ENCODE measurements at regions of chr6 and their contacts with region 1.

Region 1: DNA sequence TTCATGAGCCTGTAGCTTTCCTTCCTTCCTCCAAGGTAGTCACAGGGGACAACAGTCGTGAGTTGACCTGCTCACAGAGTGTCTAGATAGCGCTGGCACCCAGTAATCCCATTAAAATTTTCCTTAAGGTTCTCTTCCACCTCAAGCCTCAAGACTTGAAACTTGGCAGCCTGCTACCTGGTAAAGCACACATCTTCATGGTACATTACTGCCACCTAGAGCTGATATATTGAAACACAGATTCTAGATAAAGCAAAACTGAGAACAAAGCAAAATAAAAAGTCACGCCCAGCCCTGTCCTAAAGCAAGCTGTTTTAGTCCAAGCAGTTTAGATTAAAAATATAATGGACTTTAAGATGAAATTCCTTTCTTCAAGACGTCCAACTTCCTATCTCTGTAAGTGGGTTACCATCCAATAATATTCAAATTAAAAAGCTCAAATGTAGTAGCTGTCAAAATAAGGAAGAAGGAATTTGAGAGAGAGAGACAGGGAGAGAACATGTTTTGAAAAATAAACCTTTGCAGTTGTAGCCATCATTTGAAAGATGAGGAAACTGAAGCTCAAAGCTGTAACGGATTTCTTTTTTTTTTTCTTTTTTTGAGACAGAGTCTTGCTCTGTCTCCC is 50.7 kb upstream of the CD83 start:
- DNase-seq: peak; percentile 80
- ATAC-seq: peak; percentile 76
- H3K4me3 ChIP-seq: no peak overlapping the region
- H3K27ac ChIP-seq: no peak overlapping the region
- H3K4me1 ChIP-seq: peaks cover 4% of the 10 kb centered on the region
- H3K27me3 ChIP-seq: 0 out of 2 replicates have a peak, but pooled peaks cover 1% of the 10 kb centered on the region
- CTCF ChIP-seq: peak; percentile 78
- POLR2A ChIP-seq: no peak
- RAD21 ChIP-seq: peak; percentile 85

Region 2: GRCh38 chr6:12182676-12183075 is 1884.2 kb before region 1 on chr6:
- CTCF ChIA-PET with region 1: no interaction called
- POLR2A ChIA-PET with region 1: no interaction called
- dilution Hi-C with region 1: no loop called
- in situ Hi-C with region 1: no loop called
- intact Hi-C with region 1: no loop called
- DNase-seq: peak; percentile 74
- ATAC-seq: peak; percentile 92
- H3K4me3 ChIP-seq: no peak overlapping the region
- H3K27ac ChIP-seq: no peak overlapping the region
- H3K4me1 ChIP-seq: peaks cover 2% of the 10 kb centered on the region; the same call in 1 of the 2 replicates
- H3K27me3 ChIP-seq: no peaks in the 10 kb centered on the region
- CTCF ChIP-seq: no peak
- POLR2A ChIP-seq: no peak
- RAD21 ChIP-seq: no peak

Region 3: GRCh38 chr6:13508711-13509705 is 557.9 kb before region 1 on chr6:
- CTCF ChIA-PET with region 1: no interaction called
- POLR2A ChIA-PET with region 1: no interaction called
- dilution Hi-C with region 1: no loop called
- in situ Hi-C with region 1: no loop called
- intact Hi-C with region 1: no loop called
- DNase-seq: peak; percentile 44
- ATAC-seq: no peak
- H3K4me3 ChIP-seq: no peak overlapping the region
- H3K27ac ChIP-seq: no peak overlapping the region
- H3K4me1 ChIP-seq: no peaks in the 10 kb centered on the region; the same call in 1 of the 2 replicates
- H3K27me3 ChIP-seq: no peaks in the 10 kb centered on the region; the same call in 1 of the 2 replicates
- CTCF ChIP-seq: no peak
- POLR2A ChIP-seq: no peak
- RAD21 ChIP-seq: no peak

Region 4: DNA sequence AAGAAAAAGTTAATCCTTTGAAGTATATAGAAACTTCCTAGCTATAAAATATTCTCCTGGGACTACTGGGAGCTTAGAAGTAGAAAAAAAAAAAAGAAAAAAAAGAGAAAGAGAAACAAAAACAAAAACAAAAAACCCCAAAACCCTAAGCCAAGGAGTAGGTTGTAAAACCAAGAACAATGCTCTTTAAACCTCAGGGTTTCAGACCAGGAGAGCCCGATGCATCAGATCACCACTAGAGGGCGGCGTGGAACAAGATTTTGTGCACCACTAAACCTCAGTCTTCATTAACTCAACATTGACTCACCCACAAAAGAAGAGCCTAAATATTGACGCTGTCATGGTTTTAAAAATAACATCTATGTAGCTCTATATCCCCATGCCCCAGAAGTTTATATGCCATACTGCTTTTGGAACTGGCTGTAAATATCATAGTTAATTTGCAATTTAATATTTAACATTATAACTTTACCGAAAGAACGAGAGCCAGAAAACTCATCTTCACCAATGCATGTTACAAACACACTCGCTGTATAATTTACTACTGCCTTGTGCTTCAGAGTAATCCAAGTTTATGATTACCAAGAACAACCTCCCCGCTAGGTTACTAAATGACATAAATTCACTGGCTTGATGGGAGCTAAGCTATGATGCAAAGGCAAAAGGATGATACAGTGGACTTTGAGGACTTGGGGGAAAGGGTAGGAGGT is 271.7 kb before region 1 on chr6:
- CTCF ChIA-PET with region 1: no interaction called
- POLR2A ChIA-PET with region 1: no interaction called
- dilution Hi-C with region 1: no loop called
- in situ Hi-C with region 1: loop called (anchors 10 kb)
- intact Hi-C with region 1: loop called (anchors 1 kb)
- DNase-seq: peak; percentile 83
- ATAC-seq: peak; percentile 96
- H3K4me3 ChIP-seq: no peak overlapping the region
- H3K27ac ChIP-seq: no peak overlapping the region
- H3K4me1 ChIP-seq: no peaks in the 10 kb centered on the region
- H3K27me3 ChIP-seq: no peaks in the 10 kb centered on the region
- CTCF ChIP-seq: peak; percentile 91
- POLR2A ChIP-seq: peak; percentile 22; the same call in 1 of the 2 replicates
- RAD21 ChIP-seq: peak; percentile 76

Region 5: DNA sequence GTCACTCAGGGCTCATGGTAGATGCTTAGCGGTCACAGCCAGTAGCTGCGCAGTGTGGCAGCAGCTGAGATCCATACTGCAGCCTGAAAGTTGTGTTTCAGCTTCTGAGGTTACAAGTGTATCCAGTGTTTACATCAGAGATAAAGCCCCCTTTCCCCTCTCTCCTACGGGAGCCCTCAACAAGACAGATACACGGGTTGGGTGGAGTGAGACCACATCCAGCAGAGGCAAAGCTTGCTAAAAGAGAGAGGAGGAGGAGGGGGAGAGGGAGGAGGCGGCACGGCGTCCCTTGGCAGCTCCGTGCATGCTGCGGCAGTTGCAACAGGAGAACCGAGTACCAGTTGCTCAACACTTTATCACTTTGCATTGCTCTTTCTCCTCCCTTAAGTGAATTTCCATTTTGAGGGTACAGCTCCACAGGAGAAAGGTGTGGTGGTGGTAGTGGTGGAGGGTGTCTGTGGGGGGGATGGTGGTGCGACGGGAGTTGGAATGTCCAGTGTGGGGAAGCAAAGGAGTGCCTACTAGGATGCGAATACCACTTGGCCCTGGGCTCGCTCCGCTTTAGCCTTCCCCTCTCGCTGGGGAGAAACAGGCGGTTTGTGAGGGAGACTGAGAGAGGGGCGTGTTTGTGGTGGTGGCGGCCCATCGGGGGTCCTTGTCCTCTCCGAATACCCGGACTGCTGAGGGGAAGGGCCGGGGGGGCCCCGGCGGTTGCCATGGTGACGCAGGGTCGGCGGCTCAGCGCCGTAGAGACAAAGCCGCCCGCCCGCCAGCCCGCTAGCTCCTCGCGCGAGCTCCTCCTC is 142.5 kb before region 1 on chr6:
- CTCF ChIA-PET with region 1: interaction called, 12 read pairs
- POLR2A ChIA-PET with region 1: no interaction called
- dilution Hi-C with region 1: no loop called
- in situ Hi-C with region 1: no loop called
- intact Hi-C with region 1: no loop called
- DNase-seq: peak; percentile 36
- ATAC-seq: peak; percentile 88
- H3K4me3 ChIP-seq: peak overlapping the region; percentile 57
- H3K27ac ChIP-seq: peak overlapping the region; percentile 70
- H3K4me1 ChIP-seq: peaks cover 2% of the 10 kb centered on the region
- H3K27me3 ChIP-seq: peaks cover 4% of the 10 kb centered on the region; the same call in 1 of the 2 replicates
- CTCF ChIP-seq: no peak
- POLR2A ChIP-seq: no peak
- RAD21 ChIP-seq: no peak

Region 6: DNA sequence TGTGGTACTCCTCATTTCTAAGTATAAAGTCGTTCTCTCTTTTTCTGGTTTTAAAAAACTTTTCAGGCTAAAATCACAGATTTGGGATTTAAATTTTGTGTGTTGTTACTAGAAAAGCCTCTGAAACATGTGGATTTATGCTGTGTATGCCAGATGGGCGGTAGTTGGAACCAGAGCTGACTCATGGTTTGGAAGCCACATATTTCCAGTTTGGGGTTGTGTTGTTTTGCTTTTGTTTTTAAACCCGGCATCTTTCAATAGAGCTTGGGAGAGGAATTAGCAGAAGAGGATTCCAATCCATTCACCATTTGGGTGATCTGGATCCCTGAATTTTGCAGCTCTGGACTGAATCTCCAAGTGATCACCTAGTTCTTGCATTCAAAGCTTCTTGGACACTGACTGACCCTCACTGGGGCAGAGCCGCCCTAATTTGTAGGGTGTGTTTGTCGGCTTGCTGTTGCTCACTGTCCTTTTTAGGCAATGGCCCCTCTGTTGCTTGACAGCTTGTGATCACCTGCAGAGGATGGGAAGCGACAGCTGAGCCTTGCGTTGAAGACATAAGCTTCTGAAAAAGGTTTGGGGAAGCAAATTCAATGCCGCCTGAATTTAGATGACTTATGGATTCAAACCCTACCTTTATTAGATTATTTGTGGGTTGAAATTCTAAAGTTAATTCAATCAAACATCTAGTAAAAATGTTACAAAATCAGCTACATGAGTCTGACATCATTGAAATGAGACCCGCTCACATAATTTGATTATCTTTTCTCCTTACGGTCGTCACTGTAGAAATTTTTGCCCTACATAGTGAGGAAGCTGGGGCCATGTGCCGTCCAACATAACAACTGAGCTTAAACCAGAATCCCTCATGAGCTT is 29.3 kb before region 1 on chr6:
- CTCF ChIA-PET with region 1: interaction called, 12 read pairs
- POLR2A ChIA-PET with region 1: no interaction called
- dilution Hi-C with region 1: no loop called
- in situ Hi-C with region 1: no loop called
- intact Hi-C with region 1: no loop called
- DNase-seq: peak; percentile 80
- ATAC-seq: peak; percentile 22
- H3K4me3 ChIP-seq: no peak overlapping the region; the same call in 1 of the 2 replicates
- H3K27ac ChIP-seq: peak overlapping the region; percentile 91
- H3K4me1 ChIP-seq: peaks cover 18% of the 10 kb centered on the region
- H3K27me3 ChIP-seq: no peaks in the 10 kb centered on the region
- CTCF ChIP-seq: no peak
- POLR2A ChIP-seq: no peak
- RAD21 ChIP-seq: no peak

Region 7: GRCh38 chr6:14144678-14145113 is 77.8 kb after region 1 on chr6:
- CTCF ChIA-PET with region 1: interaction called, 3 read pairs
- POLR2A ChIA-PET with region 1: no interaction called
- dilution Hi-C with region 1: no loop called
- in situ Hi-C with region 1: no loop called
- intact Hi-C with region 1: loop called (anchors 5 kb)
- DNase-seq: peak; percentile 62
- ATAC-seq: peak; percentile 94
- H3K4me3 ChIP-seq: no peak overlapping the region
- H3K27ac ChIP-seq: no peak overlapping the region
- H3K4me1 ChIP-seq: no peaks in the 10 kb centered on the region
- H3K27me3 ChIP-seq: peaks cover 34% of the 10 kb centered on the region
- CTCF ChIP-seq: peak; percentile 78
- POLR2A ChIP-seq: no peak
- RAD21 ChIP-seq: peak; percentile 74

Measured in IMR-90 (cell line).